ENCODE measurements at regions of chr2 and their contacts with region 1.

Region 1: DNA sequence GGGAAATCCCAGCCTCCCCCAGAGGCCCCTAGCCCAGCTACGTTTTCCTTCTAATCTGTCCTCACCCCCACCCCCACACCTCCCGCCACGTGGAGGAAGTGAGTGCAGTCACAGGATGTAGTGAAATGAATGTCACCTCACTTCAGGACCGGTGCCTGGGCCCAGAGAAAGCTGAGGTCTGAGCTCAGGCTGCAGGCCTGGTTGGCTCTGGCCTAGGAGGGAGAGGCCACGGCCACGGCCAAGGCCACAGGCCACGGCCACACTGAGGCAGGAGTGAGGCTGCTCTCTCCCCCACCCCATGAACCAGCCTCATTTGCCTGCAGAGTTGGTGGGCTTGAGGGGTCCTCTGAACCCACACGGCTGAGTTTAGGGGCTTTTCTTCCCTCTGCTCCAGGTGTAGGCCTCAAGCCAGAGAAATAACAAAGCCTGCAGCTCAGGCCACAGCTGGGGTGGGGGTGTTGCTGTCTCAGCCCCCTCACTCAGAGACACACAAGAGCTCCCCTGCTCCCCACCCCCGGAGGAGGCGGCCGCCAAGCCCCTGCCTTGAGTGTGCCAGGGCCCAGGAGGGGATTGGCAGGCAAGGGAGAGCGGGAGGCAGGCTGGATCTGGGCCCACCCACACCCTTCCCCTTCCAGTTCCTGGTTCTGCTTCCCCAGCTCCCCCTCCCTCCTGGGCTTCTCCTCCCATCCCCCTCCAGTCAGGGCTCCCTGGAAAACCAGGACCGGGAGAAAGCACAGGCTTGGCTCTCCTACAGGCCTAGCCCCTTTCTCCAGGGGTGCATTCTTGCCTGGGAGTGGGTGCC is 27.0 kb downstream of the DNMT3A start:
- DNase-seq: peak; percentile 98
- H3K4me3 Mint-ChIP-seq: peak overlapping the region; percentile 92
- H3K27ac Mint-ChIP-seq: peak overlapping the region; percentile 97
- H3K4me1 Mint-ChIP-seq: peaks cover 64% of the 10 kb centered on the region
- H3K27me3 Mint-ChIP-seq: no peaks in the 10 kb centered on the region

Region 2: GRCh38 chr2:25276569-25277465 is 37.9 kb before region 1 on chr2:
- CTCF ChIA-PET with region 1: interaction called, 5 read pairs
- intact Hi-C with region 1: loop called (anchors 1 kb)
- DNase-seq: peak; percentile 88
- H3K4me3 Mint-ChIP-seq: peak overlapping the region; percentile 55
- H3K27ac Mint-ChIP-seq: peak overlapping the region; percentile 94
- H3K4me1 Mint-ChIP-seq: peaks cover 83% of the 10 kb centered on the region
- H3K27me3 Mint-ChIP-seq: no peaks in the 10 kb centered on the region

Region 3: DNA sequence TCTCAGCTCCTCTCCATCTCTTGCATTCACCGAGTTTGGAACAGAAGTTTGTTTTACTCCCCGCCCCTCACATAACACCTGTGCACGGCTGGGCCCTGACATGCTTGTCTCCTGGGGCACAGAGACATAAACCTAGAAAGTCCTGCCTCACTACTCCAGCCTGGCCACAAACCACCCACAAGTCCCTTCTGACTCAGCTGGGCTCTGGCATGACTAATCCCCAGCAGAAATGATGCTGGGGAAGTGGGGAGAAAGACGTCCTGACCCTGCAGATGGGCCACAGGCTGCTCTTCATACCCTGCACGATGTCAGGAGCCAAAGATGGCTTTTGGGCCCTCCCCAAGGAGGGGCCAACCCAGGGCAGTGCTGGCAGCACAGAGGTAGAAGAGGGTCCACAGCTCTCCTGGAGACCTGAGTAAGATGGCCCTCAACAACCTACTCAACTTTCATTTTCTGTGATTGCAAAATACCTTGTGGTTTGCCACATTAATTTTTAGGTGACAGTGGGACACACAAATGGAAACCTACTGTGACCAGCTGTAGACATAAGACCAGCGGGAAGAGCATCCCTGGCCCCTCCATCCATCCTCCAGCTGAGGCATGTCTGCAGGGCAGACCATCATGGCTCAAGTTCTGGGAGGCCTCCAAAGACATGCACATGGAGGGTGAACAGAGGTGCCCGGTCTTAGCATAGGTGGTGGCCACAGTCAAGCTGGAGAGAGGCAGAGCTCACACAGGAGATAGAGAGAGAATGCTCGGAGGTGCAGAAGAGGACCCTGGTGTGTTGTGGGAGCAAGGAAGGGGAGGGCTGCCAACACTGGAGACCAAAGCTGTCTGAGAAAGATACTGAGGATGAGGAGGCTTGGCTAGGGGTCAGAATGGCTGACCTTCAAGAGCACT is 13.0 kb before region 1 on chr2:
- CTCF ChIA-PET with region 1: interaction called, 4 read pairs
- intact Hi-C with region 1: loop called (anchors 1 kb)
- DNase-seq: peak; percentile 89
- H3K4me3 Mint-ChIP-seq: no peak overlapping the region
- H3K27ac Mint-ChIP-seq: peak overlapping the region; percentile 25
- H3K4me1 Mint-ChIP-seq: peaks cover 66% of the 10 kb centered on the region
- H3K27me3 Mint-ChIP-seq: no peaks in the 10 kb centered on the region

Region 4: DNA sequence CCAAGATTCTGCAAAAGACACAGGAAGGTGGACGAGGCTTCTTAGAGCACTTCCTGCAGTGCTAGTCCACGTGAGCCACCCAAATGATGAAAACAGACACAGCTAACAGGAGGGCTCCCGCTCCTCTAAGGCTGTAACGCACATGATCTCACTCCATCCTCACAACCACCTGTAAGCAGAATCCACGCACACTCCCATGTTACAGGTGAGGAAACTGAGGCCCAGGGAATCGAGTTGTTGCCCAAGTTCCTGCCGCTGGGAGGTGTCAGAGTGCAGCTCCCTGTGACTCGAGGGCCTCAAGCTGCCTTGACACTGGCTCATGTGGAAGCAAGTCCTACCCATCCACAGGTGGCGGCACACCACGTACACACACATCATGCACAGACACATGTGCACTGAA is 22.6 kb after region 1 on chr2:
- CTCF ChIA-PET with region 1: interaction called, 13 read pairs
- intact Hi-C with region 1: loop called (anchors 1 kb)
- DNase-seq: peak; percentile 53
- H3K4me3 Mint-ChIP-seq: peak overlapping the region; percentile 16
- H3K27ac Mint-ChIP-seq: peak overlapping the region; percentile 76
- H3K4me1 Mint-ChIP-seq: peaks cover 66% of the 10 kb centered on the region
- H3K27me3 Mint-ChIP-seq: no peaks in the 10 kb centered on the region

Region 5: DNA sequence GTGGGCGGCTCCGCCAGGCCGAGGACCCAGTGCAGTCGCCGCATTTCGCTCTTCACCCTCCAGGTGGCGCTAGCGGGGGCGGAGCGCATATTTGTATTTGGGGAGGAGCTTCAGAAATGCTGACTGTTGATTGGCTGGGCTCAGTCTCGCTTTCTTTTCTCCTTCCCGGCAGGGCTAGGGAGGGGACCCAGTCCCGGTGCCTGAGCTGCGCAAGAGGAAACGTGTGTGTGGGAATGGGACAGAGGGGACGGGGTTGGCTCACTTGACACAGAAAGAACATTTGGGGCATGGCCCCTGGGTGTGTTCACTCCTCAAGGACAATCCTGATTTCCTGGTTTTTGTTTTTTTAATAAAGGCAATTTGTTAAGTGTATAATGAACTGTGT is 47.3 kb after region 1 on chr2:
- CTCF ChIA-PET with region 1: interaction called, 16 read pairs
- intact Hi-C with region 1: loop called (anchors 1 kb)
- DNase-seq: peak; percentile 98
- H3K4me3 Mint-ChIP-seq: peak overlapping the region; percentile 82
- H3K27ac Mint-ChIP-seq: peak overlapping the region; percentile 94
- H3K4me1 Mint-ChIP-seq: peaks cover 11% of the 10 kb centered on the region
- H3K27me3 Mint-ChIP-seq: no peaks in the 10 kb centered on the region

Region 6: GRCh38 chr2:25558262-25558661 is 243.5 kb after region 1 on chr2:
- CTCF ChIA-PET with region 1: no interaction called
- intact Hi-C with region 1: loop called (anchors 1 kb)
- DNase-seq: peak; percentile 58
- H3K4me3 Mint-ChIP-seq: no peak overlapping the region
- H3K27ac Mint-ChIP-seq: peak overlapping the region; percentile 35
- H3K4me1 Mint-ChIP-seq: peaks cover 52% of the 10 kb centered on the region
- H3K27me3 Mint-ChIP-seq: no peaks in the 10 kb centered on the region